Activated CD8-positive, alpha-beta T cell treated with anti-CD3 and anti-CD28 coated beads for 36 hours (primary cell): ENCODE measurements at regions of chr6 and their contacts with region 1.

Region 1: DNA sequence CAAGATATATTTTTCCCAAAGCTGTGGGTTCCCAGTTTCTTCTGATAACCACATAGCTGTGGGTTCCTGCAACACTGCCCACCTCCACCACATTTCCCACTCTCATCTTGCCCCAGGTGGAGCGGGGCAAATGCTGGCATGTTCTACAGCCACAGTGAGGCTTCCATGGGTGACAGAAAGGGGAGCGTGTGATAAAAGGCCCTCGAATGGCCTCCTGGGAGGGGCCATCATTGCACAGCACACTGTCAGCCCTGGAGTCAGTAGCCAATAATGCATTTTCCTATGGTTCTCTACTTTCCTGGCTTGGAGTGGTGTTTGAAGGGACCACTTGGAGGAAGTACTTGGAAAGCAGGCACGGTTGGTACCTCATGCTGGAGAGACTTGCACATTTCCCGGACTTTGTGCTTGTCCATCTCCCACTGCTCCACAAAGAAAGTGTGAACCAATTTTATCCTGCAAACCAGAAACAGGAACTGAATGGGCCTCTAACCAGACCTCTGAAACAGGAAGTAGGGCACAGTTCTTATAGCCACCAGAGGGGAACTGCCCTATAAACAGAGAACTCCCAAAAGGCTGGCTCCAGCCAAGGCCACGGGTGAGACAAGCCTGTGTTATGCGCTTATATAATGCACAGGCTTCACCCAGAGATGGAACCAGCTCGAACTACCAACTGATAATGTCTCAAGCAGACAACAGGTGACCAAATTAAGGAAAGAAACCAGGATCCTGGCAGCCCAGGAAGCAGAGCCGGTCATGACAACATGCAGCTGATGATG is 8.6 kb downstream of the MAP3K5 start:
- DNase-seq: no peak
- ATAC-seq: peak; percentile 49
- H3K4me3 Mint-ChIP-seq: peak overlapping the region; percentile 34
- H3K27ac Mint-ChIP-seq: peak overlapping the region; percentile 78
- H3K4me1 Mint-ChIP-seq: peaks cover 71% of the 10 kb centered on the region
- H3K27me3 Mint-ChIP-seq: no peaks in the 10 kb centered on the region
- CTCF ChIP-seq: no peak

Region 2: DNA sequence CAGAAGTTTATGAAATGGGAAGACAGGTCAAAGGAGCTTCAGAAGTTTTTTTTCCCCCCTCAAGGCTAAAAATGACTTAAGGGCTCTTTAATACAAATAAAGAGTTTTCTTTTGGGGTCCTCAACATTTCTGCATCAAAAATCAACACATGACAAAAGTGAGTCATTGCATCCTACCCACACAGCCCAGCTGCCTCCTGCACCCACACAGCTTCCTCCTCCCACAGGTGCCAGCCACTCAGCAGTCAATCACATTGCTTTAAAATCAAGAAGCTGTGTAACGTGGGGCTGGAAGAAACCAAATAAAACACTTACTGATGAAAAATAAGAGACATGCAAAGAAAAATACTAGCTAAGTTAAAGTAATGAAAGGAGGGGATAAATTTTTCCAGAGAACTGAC is 59.9 kb before region 1 on chr6:
- CTCF ChIA-PET with region 1: no interaction called
- POLR2A ChIA-PET with region 1: no interaction called
- intact Hi-C with region 1: loop called (anchors 10 kb)
- DNase-seq: peak; percentile 73
- ATAC-seq: peak; percentile 80
- H3K4me3 Mint-ChIP-seq: peak overlapping the region; percentile 27
- H3K27ac Mint-ChIP-seq: peak overlapping the region; percentile 1
- H3K4me1 Mint-ChIP-seq: peaks cover 29% of the 10 kb centered on the region
- H3K27me3 Mint-ChIP-seq: no peaks in the 10 kb centered on the region
- CTCF ChIP-seq: no peak

Region 3: GRCh38 chr6:136751522-136751956 is 32.1 kb before region 1 on chr6:
- CTCF ChIA-PET with region 1: interaction called, 5 read pairs
- POLR2A ChIA-PET with region 1: interaction called, 3 read pairs
- intact Hi-C with region 1: loop called (anchors 5 kb)
- DNase-seq: peak; percentile 66
- ATAC-seq: peak; percentile 79
- H3K4me3 Mint-ChIP-seq: peak overlapping the region; percentile 18
- H3K27ac Mint-ChIP-seq: peak overlapping the region; percentile 62
- H3K4me1 Mint-ChIP-seq: peaks cover 58% of the 10 kb centered on the region
- H3K27me3 Mint-ChIP-seq: no peaks in the 10 kb centered on the region
- CTCF ChIP-seq: no peak

Region 4: GRCh38 chr6:136761227-136761922 is 22.3 kb before region 1 on chr6:
- CTCF ChIA-PET with region 1: interaction called, 3 read pairs
- POLR2A ChIA-PET with region 1: interaction called, 18 read pairs
- intact Hi-C with region 1: no loop called
- DNase-seq: peak; percentile 42
- ATAC-seq: peak; percentile 37
- H3K4me3 Mint-ChIP-seq: peak overlapping the region; percentile 52
- H3K27ac Mint-ChIP-seq: peak overlapping the region; percentile 52
- H3K4me1 Mint-ChIP-seq: peaks cover 62% of the 10 kb centered on the region
- H3K27me3 Mint-ChIP-seq: no peaks in the 10 kb centered on the region
- CTCF ChIP-seq: no peak

Region 5: GRCh38 chr6:136772685-136773472 is 10.8 kb before region 1 on chr6:
- CTCF ChIA-PET with region 1: interaction called, 3 read pairs
- POLR2A ChIA-PET with region 1: interaction called, 10 read pairs
- intact Hi-C with region 1: no loop called
- DNase-seq: no peak
- ATAC-seq: peak; percentile 55
- H3K4me3 Mint-ChIP-seq: no peak overlapping the region
- H3K27ac Mint-ChIP-seq: peak overlapping the region; percentile 4
- H3K4me1 Mint-ChIP-seq: peaks cover 34% of the 10 kb centered on the region
- H3K27me3 Mint-ChIP-seq: no peaks in the 10 kb centered on the region
- CTCF ChIP-seq: no peak